Activated naive CD4-positive, alpha-beta T cell treated with anti-CD3 and anti-CD28 coated beads for 36 hours (primary cell): ENCODE measurements at regions of chr11 and their contacts with region 1.

Region 1: DNA sequence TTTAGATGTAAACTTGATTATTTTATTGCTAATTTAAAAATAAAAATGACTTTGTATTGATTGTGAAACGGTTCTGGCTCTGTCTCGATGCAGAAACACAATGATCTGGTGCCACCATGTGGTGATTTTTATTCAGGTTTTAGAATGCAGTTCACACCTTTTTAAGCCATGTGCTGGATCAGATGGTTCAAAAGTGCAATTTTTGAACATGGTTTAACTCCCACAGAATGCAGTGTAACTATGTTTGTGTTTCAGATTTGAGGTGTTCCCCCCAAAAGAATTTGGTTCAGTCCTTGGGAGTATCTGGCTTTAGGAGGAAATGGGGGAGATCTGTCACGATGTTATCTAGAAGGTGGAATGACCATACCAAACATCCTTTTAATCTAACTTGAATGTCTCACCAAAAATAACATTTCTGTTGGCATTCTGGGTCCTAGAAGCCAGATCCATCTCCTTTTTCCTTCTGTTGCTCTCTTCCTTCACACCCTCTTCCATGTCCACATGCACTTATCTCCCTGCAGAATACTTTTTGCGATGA is 7.9 kb downstream of the MRPL16 start:
- DNase-seq: peak; percentile 53
- H3K4me3 Mint-ChIP-seq: no peak overlapping the region
- H3K27ac Mint-ChIP-seq: no peak overlapping the region
- H3K4me1 Mint-ChIP-seq: no peaks in the 10 kb centered on the region
- H3K27me3 Mint-ChIP-seq: no peaks in the 10 kb centered on the region

Region 2: GRCh38 chr11:59207988-59208451 is 594.7 kb before region 1 on chr11:
- CTCF ChIA-PET with region 1: no interaction called
- intact Hi-C with region 1: loop called (anchors 10 kb)
- DNase-seq: peak; percentile 53
- H3K4me3 Mint-ChIP-seq: no peak overlapping the region
- H3K27ac Mint-ChIP-seq: no peak overlapping the region
- H3K4me1 Mint-ChIP-seq: peaks cover 35% of the 10 kb centered on the region
- H3K27me3 Mint-ChIP-seq: peaks cover 26% of the 10 kb centered on the region

Region 3: GRCh38 chr11:59857444-59858434 is 55.0 kb after region 1 on chr11:
- CTCF ChIA-PET with region 1: no interaction called
- intact Hi-C with region 1: no loop called
- DNase-seq: peak; percentile 25
- H3K4me3 Mint-ChIP-seq: no peak overlapping the region
- H3K27ac Mint-ChIP-seq: peak overlapping the region; percentile 54
- H3K4me1 Mint-ChIP-seq: peaks cover 12% of the 10 kb centered on the region
- H3K27me3 Mint-ChIP-seq: peaks cover 13% of the 10 kb centered on the region